H1 (cell line): ENCODE measurements at regions of chr6 and their contacts with region 1.

Region 1: DNA sequence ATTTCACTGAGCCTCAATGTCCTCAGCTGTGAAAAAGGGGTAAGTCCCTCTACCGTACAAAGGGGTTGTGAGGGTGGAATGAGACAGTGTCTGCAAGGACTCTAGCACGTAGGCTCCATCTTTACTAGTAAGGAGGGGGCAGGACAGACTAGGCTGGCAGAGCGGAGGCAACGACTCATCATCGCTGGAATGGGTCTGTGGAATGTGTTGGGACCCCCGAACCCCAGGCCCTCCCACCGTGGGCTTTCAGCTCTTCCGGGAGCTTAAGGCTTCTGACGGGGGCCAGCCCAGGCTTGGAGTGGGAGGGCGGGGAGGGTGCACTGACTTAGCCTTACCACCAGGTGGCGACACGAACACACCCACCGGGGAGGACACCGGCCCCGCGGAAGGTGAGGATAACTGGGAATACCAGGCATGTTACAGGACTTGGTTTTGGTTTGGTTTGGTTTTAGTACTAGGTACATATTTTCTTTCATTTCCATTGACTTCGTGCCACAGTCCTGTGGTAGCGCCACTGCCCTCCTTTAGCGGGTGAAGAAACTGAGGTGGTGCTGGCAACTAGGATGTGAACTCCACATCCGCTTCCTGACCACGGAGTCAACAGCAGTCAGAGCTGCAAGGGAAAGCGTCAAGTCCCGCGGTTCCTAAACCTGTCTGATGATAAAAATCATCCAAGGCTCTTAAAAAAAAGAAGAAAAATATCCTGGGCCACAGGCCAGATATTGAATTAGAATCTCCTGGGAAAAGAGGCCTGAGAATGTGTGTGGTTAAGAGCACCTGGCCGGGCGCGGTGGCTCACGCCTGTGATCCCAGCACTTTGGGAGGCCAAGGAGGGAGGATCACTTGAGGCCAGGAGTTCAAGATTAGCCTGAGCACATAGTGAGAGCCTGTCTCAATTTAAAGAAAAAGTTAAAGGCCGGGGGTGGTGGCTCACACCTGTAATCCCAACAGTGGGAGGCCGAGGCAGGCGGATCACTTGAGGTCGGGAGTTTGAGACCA is 10.3 kb upstream of the TULP1 start:
- DNase-seq: peak; percentile 53 to 91
- H3K4me3 ChIP-seq: no peak overlapping the region
- H3K27ac ChIP-seq: no peak overlapping the region
- H3K4me1 ChIP-seq: peaks cover 0 to 13% (median 8%) of the 10 kb centered on the region in 4 experiments; a peak in 6 of 7 replicates
- H3K27me3 ChIP-seq: 0 out of 7 replicates have a peak, but pooled peaks cover 0 to 2% (median 0%) of the 10 kb centered on the region in 4 experiments
- CTCF ChIP-seq: peak; percentile 94 to 98 (median 94)
- EP300 ChIP-seq: no peak
- POLR2A ChIP-seq: no peak
- RAD21 ChIP-seq: peak; percentile 92 to 96

Region 2: DNA sequence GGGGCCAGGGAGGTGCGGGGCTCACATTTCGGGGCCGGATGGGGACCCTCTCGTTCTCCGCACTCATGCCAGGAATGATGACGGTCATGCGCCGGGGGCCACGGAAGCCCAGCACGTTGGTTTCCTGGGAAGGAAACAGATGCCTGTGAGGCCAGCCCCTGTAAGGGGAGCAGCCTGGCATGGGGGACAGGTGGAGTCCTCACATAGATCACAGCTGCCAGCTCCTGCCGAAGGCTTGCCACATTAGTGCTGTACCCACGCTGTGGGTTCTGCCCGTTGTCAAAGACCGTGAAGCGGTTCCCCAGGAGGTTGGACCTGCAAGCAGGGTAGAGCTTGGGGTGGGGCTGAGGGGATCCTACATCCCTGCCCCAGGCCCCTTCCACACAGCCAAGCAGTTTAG is 19.4 kb before region 1 on chr6:
- CTCF ChIA-PET with region 1: interaction called, 45 read pairs
- POLR2A ChIA-PET with region 1: interaction called, 4 read pairs
- DNase-seq: no peak
- H3K4me3 ChIP-seq: no peak overlapping the region
- H3K27ac ChIP-seq: no peak overlapping the region
- H3K4me1 ChIP-seq: peaks cover 2 to 19% (median 12%) of the 10 kb centered on the region in 4 experiments
- H3K27me3 ChIP-seq: peaks cover 0 to 7% (median 3%) of the 10 kb centered on the region in 4 experiments; a peak in 4 of 7 replicates
- CTCF ChIP-seq: no peak
- EP300 ChIP-seq: no peak
- POLR2A ChIP-seq: no peak
- RAD21 ChIP-seq: no peak

Region 3: DNA sequence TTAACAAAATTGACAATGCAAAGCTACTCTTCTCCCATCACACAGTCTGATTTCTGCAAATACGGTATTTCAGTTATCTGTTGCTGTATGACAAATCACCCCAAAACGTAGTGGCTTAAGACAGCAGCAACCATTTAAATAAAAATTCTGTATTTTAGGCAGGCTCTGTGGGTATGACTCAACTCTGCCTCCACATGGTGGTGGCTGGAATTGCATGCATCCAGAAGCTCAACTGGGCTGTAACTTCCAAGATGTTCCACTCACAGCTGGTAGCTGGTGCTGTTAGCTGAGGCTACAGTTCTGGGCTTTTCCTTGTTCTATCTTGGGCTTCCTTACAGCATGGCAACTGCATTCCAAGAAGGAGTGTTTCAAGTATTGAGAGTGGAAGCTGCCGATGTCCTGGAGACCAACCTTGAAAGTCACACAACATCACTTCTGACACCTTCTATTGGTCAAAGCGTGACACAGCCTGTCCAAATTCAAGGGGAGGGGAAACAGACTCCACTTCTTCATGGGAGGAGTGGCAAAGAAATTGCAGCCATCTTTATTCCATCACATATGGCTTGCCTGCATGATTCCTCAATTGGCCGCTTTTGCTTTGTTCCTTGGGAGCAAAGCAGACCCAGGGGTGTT is 29.4 kb after region 1 on chr6:
- CTCF ChIA-PET with region 1: interaction called, 521 read pairs
- POLR2A ChIA-PET with region 1: interaction called, 6 read pairs
- DNase-seq: peak; percentile 36 to 84
- H3K4me3 ChIP-seq: no peak overlapping the region
- H3K27ac ChIP-seq: no peak overlapping the region
- H3K4me1 ChIP-seq: no peaks in the 10 kb centered on the region
- H3K27me3 ChIP-seq: no peaks in the 10 kb centered on the region
- CTCF ChIP-seq: peak; percentile 76 to 94 (median 83)
- EP300 ChIP-seq: no peak
- POLR2A ChIP-seq: no peak
- RAD21 ChIP-seq: peak; percentile 80 to 85

Region 4: DNA sequence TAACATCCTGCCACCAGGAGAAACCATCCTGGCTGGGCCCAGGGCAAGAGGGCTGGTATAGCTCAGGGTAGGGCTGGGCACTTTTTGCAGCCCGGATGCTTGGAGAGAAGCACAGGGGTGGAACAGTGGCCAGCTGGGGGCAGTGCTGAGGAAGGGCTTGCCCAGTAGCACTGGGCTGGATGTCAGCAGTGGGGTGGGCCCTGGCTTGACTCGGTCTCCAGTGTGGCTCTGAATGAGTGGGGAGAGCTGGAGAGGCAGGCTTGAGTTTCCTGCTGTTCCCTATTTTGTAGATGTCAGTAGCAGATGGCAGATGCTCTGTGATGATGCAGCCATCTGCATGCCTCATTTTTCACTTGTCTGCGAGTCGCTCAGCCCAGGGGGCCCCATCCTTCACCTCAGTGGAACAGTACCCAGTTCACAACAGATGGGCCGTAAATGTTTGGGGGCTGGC is 46.1 kb after region 1 on chr6:
- CTCF ChIA-PET with region 1: interaction called, 21 read pairs
- POLR2A ChIA-PET with region 1: interaction called, 3 read pairs
- DNase-seq: peak in 1 of 2 experiments; percentile 83
- H3K4me3 ChIP-seq: no peak overlapping the region
- H3K27ac ChIP-seq: no peak overlapping the region
- H3K4me1 ChIP-seq: peaks cover 0 to 4% (median 2%) of the 10 kb centered on the region in 4 experiments; a peak in 3 of 7 replicates
- H3K27me3 ChIP-seq: no peaks in the 10 kb centered on the region
- CTCF ChIP-seq: peak; percentile 71 to 91 (median 87)
- EP300 ChIP-seq: no peak
- POLR2A ChIP-seq: no peak
- RAD21 ChIP-seq: peak; percentile 49 to 64

Region 5: GRCh38 chr6:35601331-35602132 is 78.6 kb after region 1 on chr6:
- CTCF ChIA-PET with region 1: interaction called, 12 read pairs
- POLR2A ChIA-PET with region 1: interaction called, 4 read pairs
- DNase-seq: peak in 1 of 2 experiments; percentile 9
- H3K4me3 ChIP-seq: no peak overlapping the region
- H3K27ac ChIP-seq: no peak overlapping the region
- H3K4me1 ChIP-seq: peaks cover 2 to 16% (median 7%) of the 10 kb centered on the region in 4 experiments; a peak in 5 of 7 replicates
- H3K27me3 ChIP-seq: no peaks in the 10 kb centered on the region
- CTCF ChIP-seq: no peak
- EP300 ChIP-seq: no peak
- POLR2A ChIP-seq: no peak
- RAD21 ChIP-seq: no peak

Region 6: GRCh38 chr6:36414481-36414880 is 891.5 kb after region 1 on chr6:
- CTCF ChIA-PET with region 1: no interaction called
- POLR2A ChIA-PET with region 1: no interaction called
- DNase-seq: no peak
- H3K4me3 ChIP-seq: no peak overlapping the region
- H3K27ac ChIP-seq: no peak overlapping the region
- H3K4me1 ChIP-seq: no peaks in the 10 kb centered on the region
- H3K27me3 ChIP-seq: no peaks in the 10 kb centered on the region
- CTCF ChIP-seq: no peak
- EP300 ChIP-seq: no peak
- POLR2A ChIP-seq: no peak
- RAD21 ChIP-seq: no peak